ENCODE measurements at regions of chr11 and their contacts with region 1.

Region 1: GRCh38 chr11:93741094-93741881 is at the starts of genes C11orf54 and TAF1D:
- DNase-seq: peak; percentile 97
- H3K4me3 Mint-ChIP-seq: peak within 1 kb of the TSS; percentile 100
- H3K27ac Mint-ChIP-seq: peak within 1 kb of the TSS; percentile 100
- H3K4me1 Mint-ChIP-seq: peaks cover 39% of the 10 kb centered on the region
- H3K27me3 Mint-ChIP-seq: no peaks in the 10 kb centered on the region
- total RNA-seq, gene C11orf54: 21.6 to 23.7 TPM
- total RNA-seq, gene TAF1D: 325 to 342 TPM

Region 2: GRCh38 chr11:93197380-93198214 is 543.7 kb before region 1 on chr11 and contains the start of gene SLC36A4:
- CTCF ChIA-PET with region 1: no interaction called
- POLR2A ChIA-PET with region 1: interaction called, 13 read pairs
- intact Hi-C with region 1: loop called (anchors 5 kb)
- DNase-seq: peak; percentile 92
- H3K4me3 Mint-ChIP-seq: peak within 1 kb of the TSS; percentile 98
- H3K27ac Mint-ChIP-seq: peak within 1 kb of the TSS; percentile 94
- H3K4me1 Mint-ChIP-seq: peaks cover 23% of the 10 kb centered on the region
- H3K27me3 Mint-ChIP-seq: peaks cover 2% of the 10 kb centered on the region
- total RNA-seq, gene SLC36A4: 13.9 to 14.0 TPM

Region 3: GRCh38 chr11:93689240-93689639 is 52.0 kb before region 1 on chr11:
- CTCF ChIA-PET with region 1: no interaction called
- POLR2A ChIA-PET with region 1: interaction called, 5 read pairs
- intact Hi-C with region 1: loop called (anchors 1 kb)
- DNase-seq: peak; percentile 73
- H3K4me3 Mint-ChIP-seq: no peak overlapping the region
- H3K27ac Mint-ChIP-seq: peak overlapping the region; percentile 91
- H3K4me1 Mint-ChIP-seq: peaks cover 17% of the 10 kb centered on the region
- H3K27me3 Mint-ChIP-seq: no peaks in the 10 kb centered on the region

Region 4: GRCh38 chr11:93784152-93784934 is 43.1 kb after region 1 on chr11 and contains the start of gene MED17:
- CTCF ChIA-PET with region 1: interaction called, 40 read pairs
- POLR2A ChIA-PET with region 1: interaction called, 126 read pairs
- intact Hi-C with region 1: loop called (anchors 1 kb)
- DNase-seq: peak; percentile 95
- H3K4me3 Mint-ChIP-seq: peak within 1 kb of the TSS; percentile 94
- H3K27ac Mint-ChIP-seq: peak within 1 kb of the TSS; percentile 93
- H3K4me1 Mint-ChIP-seq: peaks cover 43% of the 10 kb centered on the region
- H3K27me3 Mint-ChIP-seq: no peaks in the 10 kb centered on the region
- total RNA-seq, gene MED17: 32.3 to 34.7 TPM

Region 5: DNA sequence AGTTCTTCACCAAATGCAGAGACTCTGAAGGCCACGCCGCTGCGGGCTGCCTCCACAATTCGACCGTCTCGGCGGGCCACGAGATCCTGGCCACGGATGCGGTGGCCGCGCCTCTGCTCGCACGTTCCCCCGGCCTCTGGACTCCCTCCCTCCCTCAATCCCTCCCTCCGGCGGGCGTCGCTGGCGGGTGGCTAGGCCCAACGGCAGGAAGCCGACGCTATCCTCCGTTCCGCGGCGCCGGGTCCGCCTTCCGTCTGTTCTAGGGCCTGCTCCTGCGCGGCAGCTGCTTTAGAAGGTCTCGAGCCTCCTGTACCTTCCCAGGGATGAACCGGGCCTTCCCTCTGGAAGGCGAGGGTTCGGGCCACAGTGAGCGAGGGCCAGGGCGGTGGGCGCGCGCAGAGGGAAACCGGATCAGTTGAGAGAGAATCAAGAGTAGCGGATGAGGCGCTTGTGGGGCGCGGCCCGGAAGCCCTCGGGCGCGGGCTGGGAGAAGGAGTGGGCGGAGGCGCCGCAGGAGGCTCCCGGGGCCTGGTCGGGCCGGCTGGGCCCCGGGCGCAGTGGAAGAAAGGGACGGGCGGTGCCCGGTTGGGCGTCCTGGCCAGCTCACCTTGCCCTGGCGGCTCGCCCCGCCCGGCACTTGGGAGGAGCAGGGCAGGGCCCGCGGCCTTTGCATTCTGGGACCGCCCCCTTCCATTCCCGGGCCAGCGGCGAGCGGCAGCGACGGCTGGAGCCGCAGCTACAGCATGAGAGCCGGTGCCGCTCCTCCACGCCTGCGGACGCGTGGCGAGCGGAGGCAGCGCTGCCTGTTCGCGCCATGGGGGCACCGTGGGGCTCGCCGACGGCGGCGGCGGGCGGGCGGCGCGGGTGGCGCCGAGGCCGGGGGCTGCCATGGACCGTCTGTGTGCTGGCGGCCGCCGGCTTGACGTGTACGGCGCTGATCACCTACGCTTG is 802.7 kb after region 1 on chr11 and contains the start of gene FUT4:
- CTCF ChIA-PET with region 1: no interaction called
- POLR2A ChIA-PET with region 1: no interaction called
- intact Hi-C with region 1: loop called (anchors 1 kb)
- DNase-seq: peak; percentile 83
- H3K4me3 Mint-ChIP-seq: peak within 1 kb of the TSS; percentile 99
- H3K27ac Mint-ChIP-seq: peak within 1 kb of the TSS; percentile 98
- H3K4me1 Mint-ChIP-seq: peaks cover 35% of the 10 kb centered on the region
- H3K27me3 Mint-ChIP-seq: peaks cover 2% of the 10 kb centered on the region
- total RNA-seq, gene FUT4: 3.6 to 3.9 TPM

Measured in activated CD4-positive, alpha-beta memory T cell treated with anti-CD3 and anti-CD28 coated beads for 36 hours (primary cell).